WTC11 (cell line): ENCODE measurements at regions of chr12 and their contacts with region 1.

Region 1: GRCh38 chr12:52522346-52523011 is 2.3 kb upstream of the KRT5 start:
- DNase-seq: no peak
- ATAC-seq: no peak
- H3K4me3 Mint-ChIP-seq: no peak overlapping the region
- H3K27ac Mint-ChIP-seq: peak overlapping the region; percentile 36; the same call in 1 of the 2 replicates
- H3K4me1 Mint-ChIP-seq: peaks cover 7% of the 10 kb centered on the region
- H3K27me3 Mint-ChIP-seq: no peaks in the 10 kb centered on the region
- CTCF ChIP-seq: no peak

Region 2: GRCh38 chr12:52380271-52380694 is 142.2 kb before region 1 on chr12:
- CTCF ChIA-PET with region 1: interaction called, 10 read pairs
- POLR2A ChIA-PET with region 1: no interaction called
- DNase-seq: peak; percentile 66
- ATAC-seq: peak; percentile 78
- H3K4me3 Mint-ChIP-seq: no peak overlapping the region
- H3K27ac Mint-ChIP-seq: no peak overlapping the region
- H3K4me1 Mint-ChIP-seq: no peaks in the 10 kb centered on the region
- H3K27me3 Mint-ChIP-seq: no peaks in the 10 kb centered on the region; the same call in 1 of the 2 replicates
- CTCF ChIP-seq: no peak